ENCODE measurements at regions of chr11 and their contacts with region 1.

Region 1: GRCh38 chr11:59171508-59172322 is at the start of gene DTX4:
- DNase-seq: peak; percentile 95 to 98 (median 96)
- ATAC-seq: peak; percentile 89
- H3K4me3 ChIP-seq: peak within 1 kb of the TSS; percentile 37 to 60
- H3K27ac ChIP-seq: peak within 1 kb of the TSS; percentile 52 to 85 (median 75)
- H3K4me1 ChIP-seq: peaks cover 25% of the 10 kb centered on the region
- H3K27me3 ChIP-seq: no peaks in the 10 kb centered on the region
- CTCF ChIP-seq: peak; percentile 70 to 99 (median 97)
- POLR2A ChIP-seq: peak in 2 of 3 donors; percentile 12 to 37
- total RNA-seq, gene DTX4: 9.6 to 10.4 TPM

Region 2: DNA sequence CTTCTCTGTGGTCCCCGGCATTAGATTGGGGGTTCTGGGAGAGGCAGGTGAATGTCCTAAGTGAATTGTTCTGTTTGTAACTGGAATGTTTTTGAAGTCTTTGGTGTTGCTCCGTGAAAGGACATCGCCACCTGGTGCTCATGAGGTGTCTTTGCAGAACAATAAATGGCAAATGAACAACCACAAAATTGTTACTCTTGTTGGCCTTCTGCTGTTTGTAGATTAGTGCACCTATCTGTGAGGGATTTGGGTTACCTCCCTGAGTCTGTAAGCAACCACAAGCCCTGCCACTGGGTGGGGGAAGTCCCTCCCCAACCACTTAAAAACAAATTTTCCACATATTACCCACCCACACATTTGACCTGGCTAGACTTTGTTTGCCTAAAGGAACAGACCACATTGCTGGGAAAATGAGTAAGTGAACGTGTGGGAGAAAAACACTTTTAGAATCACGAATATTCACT is 36.3 kb after region 1 on chr11:
- intact Hi-C with region 1: loop called (anchors 5 kb)
- DNase-seq: peak; percentile 43 to 64 (median 58)
- ATAC-seq: peak; percentile 70
- H3K4me3 ChIP-seq: no peak overlapping the region
- H3K27ac ChIP-seq: no peak overlapping the region
- H3K4me1 ChIP-seq: peaks cover 12% of the 10 kb centered on the region
- H3K27me3 ChIP-seq: no peaks in the 10 kb centered on the region
- CTCF ChIP-seq: peak; percentile 56 to 84 (median 72)
- POLR2A ChIP-seq: no peak

Measured in body of pancreas (tissue), 4 donors.